AG04449 (cell line): ENCODE measurements at regions of chr2 and their contacts with region 1.

Region 1: GRCh38 chr2:19299020-19299419 is 59.4 kb downstream of the OSR1 start:
- DNase-seq: no peak
- H3K4me3 ChIP-seq: no peak overlapping the region
- CTCF ChIP-seq: no peak

Region 2: GRCh38 chr2:19312949-19313348 is 13.9 kb after region 1 on chr2:
- CTCF ChIA-PET with region 1: interaction called, 22 read pairs
- POLR2A ChIA-PET with region 1: no interaction called
- DNase-seq: no peak
- H3K4me3 ChIP-seq: no peak overlapping the region
- CTCF ChIP-seq: peak; percentile 32